ENCODE measurements at regions of chr1 and their contacts with region 1.

Region 1: GRCh38 chr1:235093696-235094592 is 34.7 kb downstream of the TOMM20 start:
- DNase-seq: peak; percentile 82 to 89 (median 88)
- ATAC-seq: peak; percentile 88
- H3K4me3 ChIP-seq: no peak overlapping the region
- H3K27ac ChIP-seq: no peak overlapping the region; the same call in 2 of the 3 replicates
- H3K4me1 ChIP-seq: peaks cover 14 to 18% of the 10 kb centered on the region in 2 experiments
- H3K27me3 ChIP-seq: no peaks in the 10 kb centered on the region
- CTCF ChIP-seq: peak; percentile 92 to 98 (median 96)
- EP300 ChIP-seq: no peak
- POLR2A ChIP-seq: no peak
- RAD21 ChIP-seq: peak; percentile 84 to 96

Region 2: GRCh38 chr1:234125283-234125682 is 968.7 kb before region 1 on chr1:
- CTCF ChIA-PET with region 1: no interaction called
- POLR2A ChIA-PET with region 1: interaction called, 3 read pairs
- in situ Hi-C with region 1: loop called (anchors 10 kb)
- intact Hi-C with region 1: no loop called
- DNase-seq: peak; percentile 45 to 71 (median 52)
- ATAC-seq: peak; percentile 99
- H3K4me3 ChIP-seq: no peak overlapping the region
- H3K27ac ChIP-seq: no peak overlapping the region
- H3K4me1 ChIP-seq: no peaks in the 10 kb centered on the region
- H3K27me3 ChIP-seq: peaks cover 4 to 23% of the 10 kb centered on the region in 2 experiments
- CTCF ChIP-seq: peak; percentile 72 to 82 (median 73)
- EP300 ChIP-seq: no peak
- POLR2A ChIP-seq: no peak
- RAD21 ChIP-seq: peak; percentile 44 to 78

Region 3: GRCh38 chr1:234373064-234373958 is 720.6 kb before region 1 on chr1 and contains the start of gene COA6:
- CTCF ChIA-PET with region 1: no interaction called
- POLR2A ChIA-PET with region 1: no interaction called
- in situ Hi-C with region 1: no loop called
- intact Hi-C with region 1: loop called (anchors 5 kb)
- DNase-seq: peak; percentile 90 to 99 (median 92)
- ATAC-seq: peak; percentile 90
- H3K4me3 ChIP-seq: peak within 1 kb of the TSS; percentile 81
- H3K27ac ChIP-seq: peak within 1 kb of the TSS; percentile 93
- H3K4me1 ChIP-seq: peaks cover 5 to 36% of the 10 kb centered on the region in 2 experiments
- H3K27me3 ChIP-seq: no peaks in the 10 kb centered on the region
- CTCF ChIP-seq: no peak; a peak in 1 of 6 replicates
- EP300 ChIP-seq: peak; percentile 63
- POLR2A ChIP-seq: peak; percentile 100
- RAD21 ChIP-seq: peak in 1 of 2 experiments; percentile 20; a peak in 2 of 4 replicates
- polyA plus RNA-seq, gene COA6: 171 to 187 TPM

Region 4: DNA sequence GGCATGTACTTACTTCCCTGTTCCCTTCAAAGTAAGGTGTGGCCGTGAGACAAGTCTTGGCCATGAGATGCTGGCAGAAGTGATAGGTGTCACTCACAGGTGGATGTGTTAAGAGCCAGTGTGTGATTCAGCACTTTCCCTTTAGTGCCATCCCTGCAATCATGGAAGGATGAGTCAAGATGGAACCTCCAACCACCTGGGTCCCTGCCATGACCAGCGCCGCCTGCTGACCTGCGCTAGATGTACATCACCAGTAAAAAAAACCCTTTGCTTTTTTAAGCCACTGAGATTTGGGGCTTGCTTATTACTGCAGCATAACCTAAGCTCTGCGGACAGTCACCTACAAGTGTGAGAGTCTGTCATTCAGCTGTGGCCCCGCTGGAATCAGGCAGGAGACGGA is 37.0 kb before region 1 on chr1:
- CTCF ChIA-PET with region 1: no interaction called
- POLR2A ChIA-PET with region 1: no interaction called
- in situ Hi-C with region 1: no loop called
- intact Hi-C with region 1: no loop called
- DNase-seq: peak; percentile 53 to 68 (median 56)
- ATAC-seq: peak; percentile 75
- H3K4me3 ChIP-seq: no peak overlapping the region
- H3K27ac ChIP-seq: no peak overlapping the region
- H3K4me1 ChIP-seq: no peaks in the 10 kb centered on the region; a peak in 1 of 5 replicates
- H3K27me3 ChIP-seq: peaks cover 0 to 5% of the 10 kb centered on the region in 2 experiments; a peak in 2 of 5 replicates
- CTCF ChIP-seq: peak; percentile 69 to 82 (median 72)
- EP300 ChIP-seq: no peak
- POLR2A ChIP-seq: no peak
- RAD21 ChIP-seq: peak; percentile 44 to 78

Region 5: GRCh38 chr1:235253219-235253962 is 159.4 kb after region 1 on chr1:
- CTCF ChIA-PET with region 1: no interaction called
- POLR2A ChIA-PET with region 1: no interaction called
- in situ Hi-C with region 1: no loop called
- intact Hi-C with region 1: loop called (anchors 5 kb)
- DNase-seq: peak; percentile 23 to 83 (median 44)
- ATAC-seq: peak; percentile 100
- H3K4me3 ChIP-seq: no peak overlapping the region
- H3K27ac ChIP-seq: no peak overlapping the region
- H3K4me1 ChIP-seq: no peaks in the 10 kb centered on the region
- H3K27me3 ChIP-seq: no peaks in the 10 kb centered on the region
- CTCF ChIP-seq: peak; percentile 92 to 96 (median 93)
- EP300 ChIP-seq: no peak
- POLR2A ChIP-seq: no peak
- RAD21 ChIP-seq: peak; percentile 90 to 96

Region 6: GRCh38 chr1:235504496-235505222 is 410.7 kb after region 1 on chr1:
- CTCF ChIA-PET with region 1: interaction called, 5 read pairs
- POLR2A ChIA-PET with region 1: no interaction called
- in situ Hi-C with region 1: no loop called
- intact Hi-C with region 1: loop called (anchors 2 kb)
- DNase-seq: peak; percentile 97 to 100 (median 98)
- ATAC-seq: peak; percentile 87
- H3K4me3 ChIP-seq: peak overlapping the region; percentile 66
- H3K27ac ChIP-seq: peak overlapping the region; percentile 96
- H3K4me1 ChIP-seq: peaks cover 18 to 21% of the 10 kb centered on the region in 2 experiments; a peak in 4 of 5 replicates
- H3K27me3 ChIP-seq: no peaks in the 10 kb centered on the region
- CTCF ChIP-seq: peak; percentile 90 to 97 (median 91)
- EP300 ChIP-seq: 0 out of 2 replicates have a peak, but pooled peaks have one; percentile 21
- POLR2A ChIP-seq: peak; percentile 97
- RAD21 ChIP-seq: peak; percentile 50 to 57

Region 7: DNA sequence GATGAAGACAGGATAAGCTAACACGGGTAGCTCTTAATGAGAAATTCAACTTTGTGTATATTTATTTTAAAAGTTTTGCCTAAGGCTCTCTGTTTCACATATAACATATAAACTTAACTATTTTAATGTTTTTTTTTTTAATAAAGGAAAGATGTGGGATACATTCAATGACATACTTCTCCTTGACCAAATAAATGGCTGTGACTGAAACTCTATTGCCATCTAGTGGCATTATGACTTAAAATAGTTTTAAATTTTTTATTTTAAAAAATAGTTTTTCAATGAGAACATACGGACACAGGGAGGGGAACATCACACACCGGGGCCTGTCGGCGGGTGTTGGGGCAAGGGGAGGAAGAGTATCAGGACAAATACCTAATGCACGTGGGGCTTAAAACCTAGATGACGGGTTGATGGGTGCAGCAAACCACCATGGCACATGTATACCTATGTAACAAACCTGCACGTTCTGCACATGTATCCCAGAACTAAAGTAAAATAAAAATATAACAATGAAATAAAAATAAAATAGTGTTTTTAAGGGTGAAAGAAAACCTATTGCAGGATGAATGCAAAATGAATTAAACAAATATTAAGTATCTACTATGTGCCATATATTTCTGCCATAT is 689.3 kb after region 1 on chr1:
- CTCF ChIA-PET with region 1: interaction called, 9 read pairs
- POLR2A ChIA-PET with region 1: no interaction called
- in situ Hi-C with region 1: no loop called
- intact Hi-C with region 1: loop called (anchors 2 kb)
- DNase-seq: peak in 1 of 4 experiments; percentile 34
- ATAC-seq: peak; percentile 45; the same call in 1 of the 3 replicates
- H3K4me3 ChIP-seq: no peak overlapping the region
- H3K27ac ChIP-seq: no peak overlapping the region
- H3K4me1 ChIP-seq: no peaks in the 10 kb centered on the region
- H3K27me3 ChIP-seq: peaks cover 0 to 4% of the 10 kb centered on the region in 2 experiments; a peak in 1 of 5 replicates
- CTCF ChIP-seq: peak in 2 of 3 experiments; percentile 34 to 73; a peak in 3 of 6 replicates
- EP300 ChIP-seq: no peak
- POLR2A ChIP-seq: no peak
- RAD21 ChIP-seq: peak; percentile 63 to 70

Region 8: GRCh38 chr1:235971571-235972310 is 877.8 kb after region 1 on chr1:
- CTCF ChIA-PET with region 1: no interaction called
- POLR2A ChIA-PET with region 1: no interaction called
- in situ Hi-C with region 1: no loop called
- intact Hi-C with region 1: loop called (anchors 5 kb)
- DNase-seq: peak; percentile 73 to 86 (median 78)
- ATAC-seq: peak; percentile 100
- H3K4me3 ChIP-seq: no peak overlapping the region
- H3K27ac ChIP-seq: no peak overlapping the region
- H3K4me1 ChIP-seq: peaks cover 0 to 2% of the 10 kb centered on the region in 2 experiments; a peak in 1 of 5 replicates
- H3K27me3 ChIP-seq: 0 out of 5 replicates have a peak, but pooled peaks cover 0 to 5% of the 10 kb centered on the region in 2 experiments
- CTCF ChIP-seq: peak; percentile 82 to 93 (median 92)
- EP300 ChIP-seq: no peak
- POLR2A ChIP-seq: no peak
- RAD21 ChIP-seq: peak; percentile 81 to 90